Caco-2 (cell line): ENCODE measurements at regions of chr9 and their contacts with region 1.

Region 1: GRCh38 chr9:114291064-114291474 is 31.8 kb upstream of the ORM1 start:
- DNase-seq: peak; percentile 70 to 80
- H3K4me3 ChIP-seq: no peak overlapping the region
- H3K4me3 Mint-ChIP-seq: no peak overlapping the region
- H3K27ac Mint-ChIP-seq: no peak overlapping the region
- H3K4me1 ChIP-seq: peaks cover 14% of the 10 kb centered on the region
- H3K4me1 Mint-ChIP-seq: peaks cover 7% of the 10 kb centered on the region
- H3K27me3 ChIP-seq: no peaks in the 10 kb centered on the region
- H3K27me3 Mint-ChIP-seq: no peaks in the 10 kb centered on the region
- CTCF ChIP-seq: peak; percentile 81 to 92

Region 2: GRCh38 chr9:113737517-113738271 is 553.4 kb before region 1 on chr9:
- CTCF ChIA-PET with region 1: no interaction called
- POLR2A ChIA-PET with region 1: no interaction called
- intact Hi-C with region 1: loop called (anchors 5 kb)
- DNase-seq: peak; percentile 45 to 67
- H3K4me3 ChIP-seq: no peak overlapping the region
- H3K4me3 Mint-ChIP-seq: no peak overlapping the region
- H3K27ac Mint-ChIP-seq: no peak overlapping the region
- H3K4me1 ChIP-seq: no peaks in the 10 kb centered on the region
- H3K4me1 Mint-ChIP-seq: no peaks in the 10 kb centered on the region
- H3K27me3 ChIP-seq: no peaks in the 10 kb centered on the region
- H3K27me3 Mint-ChIP-seq: peaks cover 4% of the 10 kb centered on the region
- CTCF ChIP-seq: peak; percentile 62

Region 3: DNA sequence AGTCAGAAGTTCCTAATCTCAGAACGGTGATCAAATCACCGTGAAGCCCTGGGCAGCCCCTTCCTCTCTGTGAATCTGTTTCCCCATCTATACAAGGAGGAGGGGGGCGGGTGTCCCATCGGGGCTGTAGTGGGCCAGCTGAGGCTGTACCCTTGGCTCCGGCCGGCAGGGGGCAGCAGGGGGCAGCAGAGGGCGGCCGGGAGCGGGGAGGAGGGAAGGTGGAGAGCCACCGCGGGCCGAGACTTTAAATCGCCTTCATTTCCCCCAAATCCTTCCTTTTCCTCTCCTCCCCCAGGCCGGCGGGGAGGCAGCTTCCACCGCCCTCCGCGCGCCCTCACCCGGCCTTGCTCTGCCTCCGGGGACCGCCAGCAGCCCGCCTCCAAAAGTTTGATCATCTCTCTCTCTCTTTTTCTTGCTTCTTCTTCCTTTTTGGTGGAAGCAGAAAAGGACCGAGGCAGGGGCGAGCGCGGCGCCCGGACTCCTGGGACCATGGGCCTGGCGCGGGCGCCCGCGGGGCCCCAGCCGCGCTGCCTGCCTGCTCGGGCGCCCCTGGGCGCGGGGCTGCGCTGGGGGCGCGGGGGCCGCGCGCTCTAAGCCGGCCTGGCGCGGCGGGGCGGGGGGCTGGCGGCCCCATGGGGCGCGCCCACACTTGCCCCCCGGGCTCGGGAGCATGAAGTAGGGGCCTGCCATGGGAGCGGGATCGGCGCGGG is 135.7 kb before region 1 on chr9 and contains the start of gene COL27A1:
- CTCF ChIA-PET with region 1: interaction called, 30 read pairs
- POLR2A ChIA-PET with region 1: no interaction called
- intact Hi-C with region 1: loop called (anchors 1 kb)
- DNase-seq: peak; percentile 82 to 93
- H3K4me3 ChIP-seq: peak within 1 kb of the TSS; percentile 81
- H3K4me3 Mint-ChIP-seq: peak within 1 kb of the TSS; percentile 78
- H3K27ac Mint-ChIP-seq: peak within 1 kb of the TSS; percentile 82
- H3K4me1 ChIP-seq: peaks cover 11% of the 10 kb centered on the region
- H3K4me1 Mint-ChIP-seq: peaks cover 13% of the 10 kb centered on the region
- H3K27me3 ChIP-seq: no peaks in the 10 kb centered on the region
- H3K27me3 Mint-ChIP-seq: no peaks in the 10 kb centered on the region
- CTCF ChIP-seq: peak; percentile 94 to 97
- total RNA-seq, gene COL27A1: 31.1 and 41.3 TPM in 2 replicates

Region 4: DNA sequence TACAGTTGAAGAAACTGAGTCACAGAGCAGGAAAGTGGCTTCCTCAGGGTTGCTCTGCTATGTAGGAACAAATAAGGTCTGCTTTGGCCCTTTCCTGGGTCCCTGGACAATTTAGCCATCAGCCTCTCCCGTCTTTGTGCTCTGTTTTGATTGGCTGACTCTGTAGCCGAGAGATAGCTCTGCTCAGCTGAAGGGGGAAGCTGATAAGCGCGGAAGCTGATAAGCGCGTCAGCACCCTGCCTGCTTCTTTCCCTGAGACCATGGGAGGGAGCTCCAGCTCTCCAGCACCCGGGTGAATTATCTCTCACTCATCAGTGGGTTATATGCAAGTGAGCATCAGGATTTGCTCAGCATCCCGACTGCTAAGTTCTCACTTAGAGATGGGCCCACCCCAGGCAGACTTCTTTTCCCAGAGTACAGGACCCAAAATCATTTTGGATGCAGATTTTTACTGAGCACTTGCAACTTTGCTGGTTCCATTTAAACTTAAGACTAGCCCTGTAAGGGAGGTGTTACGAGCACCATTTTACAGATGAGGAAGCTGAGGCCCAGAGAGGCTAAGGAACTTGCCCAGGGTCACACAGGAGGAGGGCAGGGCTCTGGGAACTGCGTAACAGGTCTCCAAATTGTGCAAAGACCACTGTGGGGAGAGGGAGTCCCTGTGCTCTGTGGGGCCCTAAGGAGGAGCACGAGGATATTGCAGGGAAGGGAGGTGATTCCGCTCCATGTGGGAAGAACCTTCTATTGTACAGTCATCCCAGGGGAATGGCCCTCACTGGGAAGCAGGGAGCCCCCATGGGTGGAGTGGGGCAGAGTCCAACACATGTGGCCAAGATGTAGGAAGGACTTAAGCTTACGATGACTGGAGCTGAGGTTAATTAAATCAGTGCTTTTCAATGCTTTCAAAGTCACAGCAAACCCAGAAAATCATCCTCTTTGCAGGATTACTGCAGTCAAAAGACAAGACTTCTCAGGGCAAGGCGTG is 51.9 kb before region 1 on chr9:
- CTCF ChIA-PET with region 1: interaction called, 10 read pairs
- POLR2A ChIA-PET with region 1: no interaction called
- intact Hi-C with region 1: loop called (anchors 1 kb)
- DNase-seq: peak; percentile 64 to 71
- H3K4me3 ChIP-seq: no peak overlapping the region
- H3K4me3 Mint-ChIP-seq: no peak overlapping the region
- H3K27ac Mint-ChIP-seq: no peak overlapping the region
- H3K4me1 ChIP-seq: peaks cover 4% of the 10 kb centered on the region; the same call in 1 of the 2 replicates
- H3K4me1 Mint-ChIP-seq: no peaks in the 10 kb centered on the region
- H3K27me3 ChIP-seq: no peaks in the 10 kb centered on the region
- H3K27me3 Mint-ChIP-seq: no peaks in the 10 kb centered on the region
- CTCF ChIP-seq: peak; percentile 7 to 36

Region 5: GRCh38 chr9:114397848-114398605 is 107.0 kb after region 1 on chr9:
- CTCF ChIA-PET with region 1: no interaction called
- POLR2A ChIA-PET with region 1: no interaction called
- intact Hi-C with region 1: no loop called
- DNase-seq: peak; percentile 96 to 98
- H3K4me3 ChIP-seq: peak overlapping the region; percentile 89
- H3K4me3 Mint-ChIP-seq: peak overlapping the region; percentile 91
- H3K27ac Mint-ChIP-seq: peak overlapping the region; percentile 99
- H3K4me1 ChIP-seq: peaks cover 15% of the 10 kb centered on the region
- H3K4me1 Mint-ChIP-seq: peaks cover 12% of the 10 kb centered on the region
- H3K27me3 ChIP-seq: no peaks in the 10 kb centered on the region
- H3K27me3 Mint-ChIP-seq: no peaks in the 10 kb centered on the region
- CTCF ChIP-seq: no peak